Astrocyte of the cerebellum (primary cell): ENCODE measurements at regions of chr4 and their contacts with region 1.

Region 1: GRCh38 chr4:64200001-64200555 is 209.2 kb downstream of the TECRL start:
- DNase-seq: no peak
- H3K4me3 ChIP-seq: no peak overlapping the region
- CTCF ChIP-seq: no peak

Region 2: GRCh38 chr4:64251781-64252180 is 51.7 kb after region 1 on chr4:
- in situ Hi-C with region 1: loop called (anchors 5 kb)
- DNase-seq: no peak
- H3K4me3 ChIP-seq: no peak overlapping the region
- CTCF ChIP-seq: no peak